GM12878 (cell line): ENCODE measurements at regions of chrX and their contacts with region 1.

Region 1: DNA sequence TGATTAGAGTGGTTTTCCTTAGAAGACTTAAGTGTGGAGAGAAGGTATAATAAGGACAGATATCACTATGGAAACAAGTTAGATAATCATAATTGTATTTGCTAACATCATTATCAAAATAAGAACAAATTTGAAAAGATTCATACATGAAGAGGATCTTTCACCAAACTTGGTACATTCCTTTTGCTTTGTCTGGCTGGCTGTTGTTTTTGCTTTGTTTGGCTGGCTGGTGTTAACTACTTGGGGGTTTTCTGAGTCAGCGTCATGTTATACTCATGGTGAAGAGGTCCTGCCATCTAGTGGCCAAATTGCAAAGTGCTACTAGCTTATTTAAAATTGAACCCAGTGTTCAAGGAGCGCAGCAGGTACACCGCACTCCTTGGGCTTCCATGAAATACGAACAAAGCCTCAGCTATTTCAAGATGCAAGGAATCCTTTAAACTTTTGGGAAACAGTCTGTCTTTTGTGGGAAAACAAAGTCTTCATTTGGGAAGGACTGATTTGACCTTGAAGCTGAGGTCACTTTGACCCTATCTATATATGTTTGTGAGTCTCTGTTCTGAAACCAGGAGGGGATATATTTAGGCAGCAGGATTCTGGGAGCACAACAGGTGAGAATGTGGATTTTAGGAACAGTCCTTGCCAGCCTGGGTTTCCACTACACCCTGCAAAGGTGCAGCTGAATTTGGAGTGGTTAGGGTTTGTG is 129.7 kb downstream of the PLS3 start:
- DNase-seq: peak; percentile 23
- ATAC-seq: peak; percentile 97
- H3K4me3 ChIP-seq: no peak overlapping the region
- H3K27ac ChIP-seq: no peak overlapping the region
- H3K4me1 ChIP-seq: no peaks in the 10 kb centered on the region
- H3K27me3 ChIP-seq: no peaks in the 10 kb centered on the region
- CTCF ChIP-seq: peak; percentile 70 to 87 (median 83)
- EP300 ChIP-seq: no peak
- POLR2A ChIP-seq: no peak
- RAD21 ChIP-seq: peak; percentile 63

Region 2: DNA sequence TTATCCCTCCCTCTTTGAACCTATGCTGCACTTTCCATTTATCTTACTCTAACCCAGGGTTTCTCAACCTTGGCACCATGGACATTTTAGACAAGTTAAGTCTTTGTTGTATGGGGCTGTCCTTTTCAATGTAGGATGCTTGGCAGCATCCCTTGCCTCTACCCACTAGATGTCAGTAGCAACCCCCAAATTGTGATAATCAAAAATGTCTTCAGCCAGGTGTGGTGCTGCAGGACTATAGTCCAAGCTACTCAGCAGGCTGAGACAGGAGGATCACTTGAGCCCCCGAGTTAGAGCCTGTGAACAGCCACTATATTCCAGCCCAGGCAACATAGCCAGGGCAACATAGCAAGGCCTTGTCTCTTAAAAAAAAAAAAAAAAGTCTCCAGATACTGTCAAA is 463.7 kb before region 1 on chrX:
- CTCF ChIA-PET with region 1: interaction called, 5 read pairs
- POLR2A ChIA-PET with region 1: no interaction called
- RAD21 ChIA-PET with region 1: no interaction called
- SMC1A ChIA-PET with region 1: no interaction called
- in situ Hi-C with region 1: no loop called
- intact Hi-C with region 1: loop called (anchors 2 kb)
- DNase-seq: no peak
- ATAC-seq: peak; percentile 94
- H3K4me3 ChIP-seq: no peak overlapping the region
- H3K27ac ChIP-seq: no peak overlapping the region
- H3K4me1 ChIP-seq: no peaks in the 10 kb centered on the region
- H3K27me3 ChIP-seq: no peaks in the 10 kb centered on the region; a peak in 1 of 4 replicates
- CTCF ChIP-seq: peak; percentile 23 to 61 (median 51); a peak in 3 of 6 replicates
- EP300 ChIP-seq: no peak
- POLR2A ChIP-seq: no peak
- RAD21 ChIP-seq: peak; percentile 61; the same call in 1 of the 2 replicates

Region 3: GRCh38 chrX:115337491-115338144 is 353.0 kb before region 1 on chrX:
- CTCF ChIA-PET with region 1: interaction called, 34 read pairs
- POLR2A ChIA-PET with region 1: no interaction called
- RAD21 ChIA-PET with region 1: no interaction called
- SMC1A ChIA-PET with region 1: no interaction called
- in situ Hi-C with region 1: no loop called
- intact Hi-C with region 1: loop called (anchors 5 kb)
- DNase-seq: no peak
- ATAC-seq: no peak
- H3K4me3 ChIP-seq: no peak overlapping the region
- H3K27ac ChIP-seq: no peak overlapping the region
- H3K4me1 ChIP-seq: no peaks in the 10 kb centered on the region
- H3K27me3 ChIP-seq: no peaks in the 10 kb centered on the region
- CTCF ChIP-seq: no peak
- EP300 ChIP-seq: no peak
- POLR2A ChIP-seq: no peak
- RAD21 ChIP-seq: no peak

Region 4: GRCh38 chrX:115642895-115643530 is 47.7 kb before region 1 on chrX:
- CTCF ChIA-PET with region 1: interaction called, 8 read pairs
- POLR2A ChIA-PET with region 1: no interaction called
- RAD21 ChIA-PET with region 1: interaction called, 7 read pairs
- SMC1A ChIA-PET with region 1: interaction called, 10 read pairs
- in situ Hi-C with region 1: no loop called
- intact Hi-C with region 1: no loop called
- DNase-seq: peak; percentile 23
- ATAC-seq: peak; percentile 72
- H3K4me3 ChIP-seq: no peak overlapping the region
- H3K27ac ChIP-seq: no peak overlapping the region
- H3K4me1 ChIP-seq: no peaks in the 10 kb centered on the region
- H3K27me3 ChIP-seq: no peaks in the 10 kb centered on the region
- CTCF ChIP-seq: peak; percentile 76 to 86 (median 83)
- EP300 ChIP-seq: no peak
- POLR2A ChIP-seq: no peak
- RAD21 ChIP-seq: peak; percentile 90

Region 5: DNA sequence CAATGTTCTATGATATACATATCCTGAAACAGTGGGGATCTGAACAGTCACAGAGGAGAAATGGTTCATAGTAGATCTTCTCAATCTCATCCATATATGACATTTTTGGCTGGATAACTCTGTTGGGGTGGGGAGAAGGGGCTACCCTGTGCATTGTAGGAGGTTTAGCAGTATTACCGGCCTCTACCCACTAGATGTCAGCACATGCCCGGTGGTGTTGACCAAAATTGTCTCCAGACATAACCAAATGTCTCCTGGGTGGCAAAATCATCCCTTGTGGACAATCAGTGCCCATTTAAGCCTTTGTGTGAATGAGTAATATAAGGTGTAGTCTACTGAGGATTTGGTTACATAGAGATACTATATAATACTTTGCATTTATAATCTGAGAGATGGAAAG is 39.7 kb before region 1 on chrX:
- CTCF ChIA-PET with region 1: interaction called, 22 read pairs
- POLR2A ChIA-PET with region 1: no interaction called
- RAD21 ChIA-PET with region 1: interaction called, 6 read pairs
- SMC1A ChIA-PET with region 1: interaction called, 12 read pairs
- in situ Hi-C with region 1: no loop called
- intact Hi-C with region 1: loop called (anchors 1 kb)
- DNase-seq: peak; percentile 17
- ATAC-seq: peak; percentile 84
- H3K4me3 ChIP-seq: no peak overlapping the region
- H3K27ac ChIP-seq: no peak overlapping the region
- H3K4me1 ChIP-seq: no peaks in the 10 kb centered on the region
- H3K27me3 ChIP-seq: no peaks in the 10 kb centered on the region
- CTCF ChIP-seq: peak; percentile 61 to 72 (median 68)
- EP300 ChIP-seq: no peak
- POLR2A ChIP-seq: no peak
- RAD21 ChIP-seq: peak; percentile 78

Region 6: DNA sequence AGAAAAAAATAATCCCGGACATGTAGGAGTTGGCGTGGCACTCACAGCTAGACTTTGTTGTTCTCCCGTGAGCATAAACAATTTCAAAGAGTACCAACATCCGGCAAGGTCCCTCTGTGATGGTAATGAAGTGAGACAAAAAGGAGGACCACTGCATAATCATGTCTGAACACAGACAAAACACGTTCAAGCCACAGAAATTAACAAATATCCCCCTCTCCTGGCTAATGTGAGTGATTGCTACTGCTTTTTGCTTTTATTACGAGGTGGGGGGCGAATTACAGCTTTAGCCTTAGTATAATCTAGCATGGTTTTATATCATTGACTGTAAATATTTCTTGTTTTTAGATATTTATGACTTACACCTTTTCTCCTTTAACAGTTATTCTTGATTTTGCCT is 11.2 kb before region 1 on chrX:
- CTCF ChIA-PET with region 1: interaction called, 24 read pairs
- POLR2A ChIA-PET with region 1: no interaction called
- RAD21 ChIA-PET with region 1: interaction called, 3 read pairs
- SMC1A ChIA-PET with region 1: interaction called, 6 read pairs
- in situ Hi-C with region 1: no loop called
- intact Hi-C with region 1: no loop called
- DNase-seq: no peak
- ATAC-seq: peak; percentile 55
- H3K4me3 ChIP-seq: no peak overlapping the region
- H3K27ac ChIP-seq: no peak overlapping the region
- H3K4me1 ChIP-seq: no peaks in the 10 kb centered on the region
- H3K27me3 ChIP-seq: no peaks in the 10 kb centered on the region
- CTCF ChIP-seq: peak; percentile 21 to 26 (median 23); a peak in 1 of 6 replicates
- EP300 ChIP-seq: no peak
- POLR2A ChIP-seq: no peak
- RAD21 ChIP-seq: peak; percentile 41

Region 7: GRCh38 chrX:115940888-115941332 is 250.2 kb after region 1 on chrX:
- CTCF ChIA-PET with region 1: interaction called, 4 read pairs
- POLR2A ChIA-PET with region 1: no interaction called
- RAD21 ChIA-PET with region 1: no interaction called
- SMC1A ChIA-PET with region 1: interaction called, 5 read pairs
- in situ Hi-C with region 1: no loop called
- intact Hi-C with region 1: loop called (anchors 5 kb)
- DNase-seq: peak; percentile 43
- ATAC-seq: peak; percentile 77
- H3K4me3 ChIP-seq: no peak overlapping the region
- H3K27ac ChIP-seq: 0 out of 2 replicates have a peak overlapping the region, but pooled peaks have one; percentile 5
- H3K4me1 ChIP-seq: peaks cover 11% of the 10 kb centered on the region; the same call in 1 of the 2 replicates
- H3K27me3 ChIP-seq: no peaks in the 10 kb centered on the region
- CTCF ChIP-seq: peak; percentile 17 to 70 (median 40); a peak in 5 of 6 replicates
- EP300 ChIP-seq: no peak
- POLR2A ChIP-seq: no peak
- RAD21 ChIP-seq: peak; percentile 90